Natural killer cell (primary cell): ENCODE measurements at regions of chr10 and their contacts with region 1.

Region 1: DNA sequence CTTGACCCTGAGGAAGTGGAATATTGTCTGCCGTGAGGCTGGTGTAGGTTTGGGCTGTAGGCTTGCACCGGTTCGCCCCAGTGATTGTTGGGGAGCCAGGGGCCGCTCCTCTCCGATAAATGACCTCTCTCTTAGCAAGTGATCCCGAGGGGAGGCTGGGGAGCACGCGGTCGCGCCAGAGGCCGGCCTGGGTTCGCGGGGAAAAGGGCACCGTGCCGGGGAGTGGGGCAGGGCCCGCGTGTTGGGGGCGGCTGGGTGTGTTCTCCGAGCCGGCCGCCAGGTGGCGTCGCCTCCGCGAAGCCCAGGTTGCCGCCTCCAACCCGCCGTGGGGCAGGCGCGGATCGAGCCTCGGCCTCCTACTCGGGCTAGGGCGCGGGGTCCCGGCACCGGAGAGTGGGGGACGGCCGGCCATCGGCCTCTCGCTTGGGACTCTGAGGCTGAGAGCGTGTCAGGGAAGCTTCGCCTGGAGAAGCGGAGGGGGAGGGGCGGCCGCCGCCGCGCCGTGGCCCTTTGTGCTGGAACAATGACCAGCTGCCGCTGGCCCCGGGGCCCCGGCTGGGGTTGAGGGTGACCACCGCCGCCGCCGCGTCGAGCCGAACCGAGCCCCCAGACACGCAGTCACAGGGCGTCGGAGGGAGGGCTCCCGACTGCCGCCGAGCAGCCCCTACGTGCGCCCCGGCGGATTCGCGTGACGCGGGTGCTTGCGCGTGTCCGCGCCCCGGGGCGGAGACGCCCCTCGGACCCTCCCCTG is 442 bp upstream of the LZTS2 start:
- DNase-seq: peak; percentile 80 to 90
- ATAC-seq: peak; percentile 78 to 88 (median 80)
- H3K4me3 ChIP-seq: peak overlapping the region; percentile 83
- H3K4me3 Mint-ChIP-seq: peak overlapping the region; percentile 89
- H3K27ac ChIP-seq: peak overlapping the region; percentile 77
- H3K27ac Mint-ChIP-seq: peak overlapping the region; percentile 71 to 82
- H3K4me1 ChIP-seq: peaks cover 35% of the 10 kb centered on the region
- H3K4me1 Mint-ChIP-seq: peaks cover 14 to 34% of the 10 kb centered on the region in 2 donors
- H3K27me3 ChIP-seq: no peaks in the 10 kb centered on the region
- H3K27me3 Mint-ChIP-seq: peaks cover 0 to 4% of the 10 kb centered on the region in 2 donors
- CTCF ChIP-seq: peak; percentile 94

Region 2: GRCh38 chr10:100986952-100987750 is 12.0 kb before region 1 on chr10 and contains the starts of genes MRPL43 and TWNK:
- intact Hi-C with region 1: loop called (anchors 1 kb)
- DNase-seq: peak; percentile 76 to 91
- ATAC-seq: peak; percentile 89 to 97 (median 97)
- H3K4me3 ChIP-seq: peak within 1 kb of the TSS; percentile 78
- H3K4me3 Mint-ChIP-seq: peak within 1 kb of the TSS; percentile 89
- H3K27ac ChIP-seq: peak within 1 kb of the TSS; percentile 6
- H3K27ac Mint-ChIP-seq: peak within 1 kb of the TSS; percentile 76 to 91
- H3K4me1 ChIP-seq: peaks cover 23% of the 10 kb centered on the region
- H3K4me1 Mint-ChIP-seq: peaks cover 10 to 26% of the 10 kb centered on the region in 2 donors
- H3K27me3 ChIP-seq: no peaks in the 10 kb centered on the region
- H3K27me3 Mint-ChIP-seq: no peaks in the 10 kb centered on the region
- CTCF ChIP-seq: no peak
- total RNA-seq, gene MRPL43: 27.2 to 42.0 (median 33.1) TPM
- total RNA-seq, gene TWNK: 2.2 to 3.6 (median 3.3) TPM

Region 3: GRCh38 chr10:101012525-101013364 is 13.6 kb after region 1 on chr10:
- intact Hi-C with region 1: loop called (anchors 1 kb)
- DNase-seq: peak; percentile 53 to 87
- ATAC-seq: peak; percentile 82 to 84 (median 83)
- H3K4me3 ChIP-seq: no peak overlapping the region
- H3K4me3 Mint-ChIP-seq: no peak overlapping the region
- H3K27ac ChIP-seq: no peak overlapping the region
- H3K27ac Mint-ChIP-seq: peak overlapping the region in 1 of 2 donors; percentile 9
- H3K4me1 ChIP-seq: peaks cover 8% of the 10 kb centered on the region
- H3K4me1 Mint-ChIP-seq: peaks cover 10 to 16% of the 10 kb centered on the region in 2 donors
- H3K27me3 ChIP-seq: peaks cover 8% of the 10 kb centered on the region
- H3K27me3 Mint-ChIP-seq: peaks cover 28 to 34% of the 10 kb centered on the region in 2 donors
- CTCF ChIP-seq: peak; percentile 67

Region 4: DNA sequence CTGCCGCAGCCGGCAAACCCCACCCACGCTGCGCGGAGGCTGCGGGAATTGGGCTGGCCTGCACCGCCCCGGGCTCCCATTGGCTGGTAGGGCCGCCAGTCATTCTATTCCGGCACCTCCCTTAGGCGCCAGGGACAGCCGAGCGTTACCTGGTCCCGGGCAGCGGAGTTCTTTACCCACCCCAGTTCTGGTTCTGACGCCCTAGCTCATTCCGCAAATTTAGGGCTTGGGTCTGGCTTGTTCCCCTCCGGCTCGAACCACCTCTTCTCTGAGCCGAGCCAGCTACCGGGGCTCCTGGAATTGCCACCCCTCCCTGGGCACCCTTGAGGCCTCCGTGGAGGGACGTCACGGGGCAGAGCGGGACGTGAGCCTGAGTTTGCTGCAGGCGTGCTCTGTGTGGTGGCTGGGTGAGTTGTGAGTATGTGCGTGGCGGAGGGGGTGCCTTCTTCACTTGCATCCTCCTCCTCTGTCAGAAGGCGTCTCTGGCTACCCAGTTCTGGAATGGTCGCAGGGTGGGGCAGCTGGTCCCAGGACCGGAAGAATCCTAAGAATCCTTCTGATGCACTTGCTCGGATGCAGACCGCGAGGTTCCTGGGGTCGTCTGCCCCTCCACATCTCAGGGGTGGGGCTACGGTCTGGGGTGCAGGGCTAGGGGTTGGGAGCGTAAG is 32.1 kb after region 1 on chr10 and contains the starts of genes PDZD7 and SFXN3:
- intact Hi-C with region 1: loop called (anchors 5 kb)
- DNase-seq: peak; percentile 96 to 98
- ATAC-seq: peak; percentile 76 to 91 (median 85)
- H3K4me3 ChIP-seq: peak within 1 kb of the TSS; percentile 50
- H3K4me3 Mint-ChIP-seq: peak within 1 kb of the TSS; percentile 88
- H3K27ac ChIP-seq: peak within 1 kb of the TSS; percentile 98
- H3K27ac Mint-ChIP-seq: peak within 1 kb of the TSS; percentile 83 to 89
- H3K4me1 ChIP-seq: peaks cover 28% of the 10 kb centered on the region
- H3K4me1 Mint-ChIP-seq: peaks cover 27 to 28% of the 10 kb centered on the region in 2 donors
- H3K27me3 ChIP-seq: no peaks in the 10 kb centered on the region
- H3K27me3 Mint-ChIP-seq: peaks cover 0 to 7% of the 10 kb centered on the region in 2 donors
- CTCF ChIP-seq: no peak
- total RNA-seq, gene PDZD7: 0.35 to 1.2 (median 0.52) TPM
- total RNA-seq, gene SFXN3: 59.7 to 74.5 (median 68.9) TPM

Region 5: GRCh38 chr10:101041252-101041761 is 42.1 kb after region 1 on chr10:
- intact Hi-C with region 1: no loop called
- DNase-seq: peak; percentile 65 to 88
- ATAC-seq: peak; percentile 87
- H3K4me3 ChIP-seq: no peak overlapping the region
- H3K4me3 Mint-ChIP-seq: no peak overlapping the region
- H3K27ac ChIP-seq: no peak overlapping the region
- H3K27ac Mint-ChIP-seq: peak overlapping the region; percentile 51 to 89
- H3K4me1 ChIP-seq: peaks cover 18% of the 10 kb centered on the region
- H3K4me1 Mint-ChIP-seq: peaks cover 25 to 29% of the 10 kb centered on the region in 2 donors
- H3K27me3 ChIP-seq: peaks cover 5% of the 10 kb centered on the region
- H3K27me3 Mint-ChIP-seq: peaks cover 2 to 4% of the 10 kb centered on the region in 2 donors
- CTCF ChIP-seq: peak; percentile 78

Region 6: GRCh38 chr10:101052285-101052684 is 53.1 kb after region 1 on chr10:
- intact Hi-C with region 1: no loop called
- DNase-seq: no peak
- ATAC-seq: no peak
- H3K4me3 ChIP-seq: no peak overlapping the region
- H3K4me3 Mint-ChIP-seq: no peak overlapping the region
- H3K27ac ChIP-seq: no peak overlapping the region
- H3K27ac Mint-ChIP-seq: no peak overlapping the region
- H3K4me1 ChIP-seq: peaks cover 9% of the 10 kb centered on the region
- H3K4me1 Mint-ChIP-seq: peaks cover 8 to 15% of the 10 kb centered on the region in 2 donors
- H3K27me3 ChIP-seq: peaks cover 34% of the 10 kb centered on the region
- H3K27me3 Mint-ChIP-seq: peaks cover 33% of the 10 kb centered on the region in 2 donors
- CTCF ChIP-seq: no peak